ENCODE measurements at regions of chr6 and their contacts with region 1.

Region 1: GRCh38 chr6:136783495-136784270 is 8.6 kb downstream of the MAP3K5 start:
- DNase-seq: peak in 3 of 14 experiments; percentile 54 to 64 (median 55)
- ATAC-seq: peak; percentile 28
- H3K4me3 ChIP-seq: peak overlapping the region; percentile 12
- H3K4me3 Mint-ChIP-seq: peak overlapping the region; percentile 72
- H3K27ac ChIP-seq: no peak overlapping the region
- H3K27ac Mint-ChIP-seq: peak overlapping the region; percentile 67
- H3K4me1 ChIP-seq: peaks cover 67% of the 10 kb centered on the region
- H3K4me1 Mint-ChIP-seq: peaks cover 70% of the 10 kb centered on the region
- H3K27me3 ChIP-seq: no peaks in the 10 kb centered on the region
- H3K27me3 Mint-ChIP-seq: no peaks in the 10 kb centered on the region
- CTCF ChIP-seq: no peak

Region 2: DNA sequence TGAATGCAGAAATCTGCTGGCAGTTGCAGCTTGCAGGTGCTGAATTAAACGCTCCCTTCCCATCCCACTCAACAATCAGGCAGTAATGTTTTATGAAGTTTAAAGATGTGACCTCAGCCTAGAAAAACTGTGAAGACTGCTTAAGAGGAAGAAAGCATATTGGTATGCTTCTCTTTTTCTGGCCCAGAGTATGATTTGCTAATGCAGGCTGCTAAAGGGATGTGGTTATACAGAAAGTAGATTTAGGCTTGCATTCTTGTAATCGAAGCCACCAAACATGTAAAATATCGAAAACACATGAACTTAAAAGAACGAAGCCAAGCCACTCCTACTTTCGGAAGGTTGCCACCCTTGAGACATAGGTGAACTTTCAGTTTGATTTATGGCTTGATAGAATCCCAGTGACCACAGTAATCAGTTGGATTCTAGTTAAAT is 32.1 kb before region 1 on chr6:
- CTCF ChIA-PET with region 1: interaction called, 3 read pairs
- POLR2A ChIA-PET with region 1: interaction called, 110 read pairs
- intact Hi-C with region 1: loop called in 1 of 2 experiments (anchors 2 kb)
- DNase-seq: peak in 5 of 14 experiments; percentile 41 to 85 (median 68)
- ATAC-seq: peak; percentile 53
- H3K4me3 ChIP-seq: peak overlapping the region; percentile 27
- H3K4me3 Mint-ChIP-seq: peak overlapping the region; percentile 53
- H3K27ac ChIP-seq: peak overlapping the region; percentile 32 to 77
- H3K27ac Mint-ChIP-seq: peak overlapping the region; percentile 74
- H3K4me1 ChIP-seq: peaks cover 71% of the 10 kb centered on the region
- H3K4me1 Mint-ChIP-seq: peaks cover 84% of the 10 kb centered on the region
- H3K27me3 ChIP-seq: no peaks in the 10 kb centered on the region
- H3K27me3 Mint-ChIP-seq: no peaks in the 10 kb centered on the region
- CTCF ChIP-seq: no peak

Region 3: DNA sequence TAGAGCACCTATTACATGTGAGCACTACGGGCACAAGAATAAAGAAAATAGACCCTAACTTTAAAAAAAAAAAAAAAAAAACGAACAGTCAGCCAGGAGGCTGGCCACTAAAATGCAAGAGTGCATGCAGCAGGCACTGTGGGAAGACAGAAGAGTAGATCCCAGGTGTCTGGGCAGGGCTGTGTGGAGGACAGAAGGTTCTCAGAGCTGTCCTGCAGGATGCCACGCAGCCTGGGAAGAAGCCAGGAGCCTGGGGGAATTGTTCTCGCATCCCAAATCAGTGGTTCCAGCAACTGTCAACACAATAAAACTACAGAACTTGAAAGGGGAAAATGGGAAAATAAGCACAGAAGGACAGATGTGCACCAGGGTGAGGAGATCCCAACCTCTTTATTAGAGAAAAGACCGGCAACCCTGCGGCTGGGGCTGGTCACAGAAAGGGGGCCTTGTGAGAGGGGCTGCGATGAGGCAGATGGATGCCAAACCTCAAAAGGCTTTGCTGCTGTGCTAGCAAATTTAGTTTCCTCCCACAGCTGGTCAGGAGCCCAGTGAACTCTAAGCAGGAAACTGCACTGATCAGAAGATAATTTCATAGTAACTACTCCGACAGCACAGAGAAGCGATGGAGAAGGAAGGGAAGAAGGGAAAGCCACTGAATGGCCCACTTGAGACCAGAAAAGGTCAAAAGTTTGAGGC is 22.3 kb before region 1 on chr6:
- CTCF ChIA-PET with region 1: interaction called, 4 read pairs
- POLR2A ChIA-PET with region 1: interaction called, 151 read pairs
- intact Hi-C with region 1: loop called in 1 of 2 experiments (anchors 2 kb)
- DNase-seq: peak in 5 of 14 experiments; percentile 12 to 78 (median 51)
- ATAC-seq: peak; percentile 52
- H3K4me3 ChIP-seq: peak overlapping the region; percentile 42
- H3K4me3 Mint-ChIP-seq: peak overlapping the region; percentile 73
- H3K27ac ChIP-seq: peak overlapping the region; percentile 22 to 51
- H3K27ac Mint-ChIP-seq: peak overlapping the region; percentile 82
- H3K4me1 ChIP-seq: peaks cover 75% of the 10 kb centered on the region
- H3K4me1 Mint-ChIP-seq: peaks cover 68% of the 10 kb centered on the region
- H3K27me3 ChIP-seq: no peaks in the 10 kb centered on the region
- H3K27me3 Mint-ChIP-seq: no peaks in the 10 kb centered on the region
- CTCF ChIP-seq: no peak

Region 4: DNA sequence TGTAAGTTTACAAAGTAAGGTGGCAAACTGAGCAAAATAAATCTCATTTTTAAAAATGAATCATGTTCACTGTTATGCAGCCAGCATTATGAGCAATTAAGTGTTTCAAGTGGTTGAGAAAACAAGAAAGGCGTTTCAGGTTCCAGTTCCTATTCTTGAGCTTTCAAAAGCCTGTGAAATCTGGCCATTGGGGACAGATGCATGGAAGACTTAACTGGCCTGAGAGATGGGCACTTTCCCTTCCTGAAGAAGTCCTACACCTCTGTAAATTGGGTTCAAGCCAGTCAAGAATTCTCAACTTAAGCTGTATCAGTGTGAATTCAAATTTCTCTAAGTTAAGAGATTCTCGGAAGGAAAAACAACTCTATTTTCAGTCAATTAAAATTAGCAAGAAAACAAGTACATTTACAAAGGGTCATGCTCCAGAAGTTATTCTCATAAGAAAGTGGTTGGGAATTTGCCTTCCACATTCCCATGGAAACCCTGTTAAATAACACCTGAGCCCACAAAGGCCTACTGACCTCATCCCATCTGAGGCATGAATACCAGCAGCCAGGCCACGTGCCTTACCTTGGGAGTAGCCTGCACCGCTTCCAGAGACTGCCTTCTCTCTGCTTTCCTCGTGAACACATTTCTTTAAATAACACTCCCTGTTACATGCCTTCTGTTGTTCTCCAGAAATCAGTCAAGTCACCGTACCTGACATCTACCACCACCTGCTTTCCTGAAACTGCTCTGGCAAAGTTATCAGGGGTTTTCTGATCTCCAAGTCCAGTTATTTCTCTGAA is 10.8 kb before region 1 on chr6:
- CTCF ChIA-PET with region 1: interaction called, 6 read pairs
- POLR2A ChIA-PET with region 1: interaction called, 9 read pairs
- intact Hi-C with region 1: loop called in 1 of 2 experiments (anchors 2 kb)
- DNase-seq: no peak
- ATAC-seq: no peak
- H3K4me3 ChIP-seq: no peak overlapping the region
- H3K4me3 Mint-ChIP-seq: no peak overlapping the region
- H3K27ac ChIP-seq: no peak overlapping the region
- H3K27ac Mint-ChIP-seq: peak overlapping the region; percentile 27
- H3K4me1 ChIP-seq: peaks cover 44% of the 10 kb centered on the region
- H3K4me1 Mint-ChIP-seq: peaks cover 61% of the 10 kb centered on the region
- H3K27me3 ChIP-seq: no peaks in the 10 kb centered on the region
- H3K27me3 Mint-ChIP-seq: no peaks in the 10 kb centered on the region
- CTCF ChIP-seq: no peak

Region 5: DNA sequence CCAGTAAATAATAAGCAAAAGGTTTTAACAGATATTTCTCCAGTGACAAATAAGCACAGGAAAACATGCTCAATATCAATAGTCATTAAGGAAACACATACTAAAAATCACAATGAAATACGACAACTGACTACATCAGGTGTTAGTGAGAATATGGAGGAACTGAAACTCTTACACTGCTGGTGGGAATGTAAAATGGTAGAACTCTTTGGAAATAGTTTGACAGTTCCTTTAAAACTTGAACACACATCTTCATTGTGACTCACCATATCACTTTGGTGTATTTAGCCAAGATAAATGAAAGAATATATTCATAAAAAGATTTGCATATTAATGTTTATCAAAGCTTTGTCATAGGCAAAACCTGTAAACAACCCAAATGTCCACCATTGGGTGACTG is 19.9 kb after region 1 on chr6:
- CTCF ChIA-PET with region 1: no interaction called
- POLR2A ChIA-PET with region 1: no interaction called
- intact Hi-C with region 1: no loop called
- DNase-seq: no peak
- ATAC-seq: no peak
- H3K4me3 ChIP-seq: no peak overlapping the region
- H3K4me3 Mint-ChIP-seq: no peak overlapping the region
- H3K27ac ChIP-seq: no peak overlapping the region
- H3K27ac Mint-ChIP-seq: no peak overlapping the region
- H3K4me1 ChIP-seq: no peaks in the 10 kb centered on the region
- H3K4me1 Mint-ChIP-seq: no peaks in the 10 kb centered on the region
- H3K27me3 ChIP-seq: no peaks in the 10 kb centered on the region
- H3K27me3 Mint-ChIP-seq: no peaks in the 10 kb centered on the region
- CTCF ChIP-seq: no peak

Region 6: GRCh38 chr6:137791281-137792159 is 1007.8 kb after region 1 on chr6:
- CTCF ChIA-PET with region 1: no interaction called
- POLR2A ChIA-PET with region 1: no interaction called
- intact Hi-C with region 1: no loop called
- DNase-seq: no peak
- ATAC-seq: peak; percentile 23
- H3K4me3 ChIP-seq: peak overlapping the region; percentile 15
- H3K4me3 Mint-ChIP-seq: no peak overlapping the region
- H3K27ac ChIP-seq: no peak overlapping the region
- H3K27ac Mint-ChIP-seq: peak overlapping the region; percentile 1
- H3K4me1 ChIP-seq: peaks cover 36% of the 10 kb centered on the region
- H3K4me1 Mint-ChIP-seq: peaks cover 56% of the 10 kb centered on the region
- H3K27me3 ChIP-seq: no peaks in the 10 kb centered on the region
- H3K27me3 Mint-ChIP-seq: no peaks in the 10 kb centered on the region
- CTCF ChIP-seq: no peak